ENCODE measurements at regions of chr15 and their contacts with region 1.

Region 1: DNA sequence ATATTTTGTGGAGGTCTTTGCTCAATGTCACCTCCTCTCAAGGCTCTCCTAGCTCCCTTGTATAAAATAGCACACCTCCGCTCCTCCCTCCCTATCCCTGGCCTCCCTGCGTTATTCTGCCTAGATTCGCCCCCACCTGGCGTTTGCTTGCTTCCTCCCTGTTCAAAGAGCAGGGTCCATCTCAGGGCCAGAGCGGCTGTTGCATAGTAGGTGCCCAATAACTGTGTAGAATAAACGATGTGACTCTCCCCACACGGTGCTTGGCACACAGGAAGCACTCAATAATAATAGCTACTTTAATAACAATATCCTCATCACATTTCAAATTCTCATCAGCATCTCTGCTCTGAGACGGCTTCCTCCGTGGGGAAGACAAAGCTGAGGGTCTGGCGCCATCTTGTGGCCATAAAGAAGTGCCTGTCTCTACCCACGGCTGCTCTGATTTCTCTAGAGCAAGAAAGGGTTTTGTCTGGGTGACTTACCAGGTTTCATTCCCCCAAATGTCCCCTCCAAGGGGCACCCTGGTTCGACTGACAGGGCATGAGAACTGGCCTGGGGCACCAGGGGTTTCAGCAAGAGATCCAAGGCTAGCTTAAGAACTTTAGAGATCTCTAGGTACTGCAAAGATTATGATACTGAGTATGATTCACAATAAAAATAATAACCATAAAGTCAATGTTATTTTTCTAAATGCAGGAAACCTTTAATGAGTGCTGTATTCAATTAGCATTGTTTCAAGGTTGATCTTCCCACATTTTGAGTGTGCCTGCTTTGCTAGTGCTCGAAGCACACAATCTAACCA is 16.1 kb downstream of the CD276 start:
- DNase-seq: peak; percentile 71 to 93 (median 82)
- H3K4me3 ChIP-seq: no peak overlapping the region
- H3K27ac ChIP-seq: no peak overlapping the region
- H3K4me1 ChIP-seq: peaks cover 26 to 34% of the 10 kb centered on the region in 2 donors
- H3K27me3 ChIP-seq: no peaks in the 10 kb centered on the region
- CTCF ChIP-seq: peak; percentile 86 to 95 (median 93)
- POLR2A ChIP-seq: no peak

Region 2: DNA sequence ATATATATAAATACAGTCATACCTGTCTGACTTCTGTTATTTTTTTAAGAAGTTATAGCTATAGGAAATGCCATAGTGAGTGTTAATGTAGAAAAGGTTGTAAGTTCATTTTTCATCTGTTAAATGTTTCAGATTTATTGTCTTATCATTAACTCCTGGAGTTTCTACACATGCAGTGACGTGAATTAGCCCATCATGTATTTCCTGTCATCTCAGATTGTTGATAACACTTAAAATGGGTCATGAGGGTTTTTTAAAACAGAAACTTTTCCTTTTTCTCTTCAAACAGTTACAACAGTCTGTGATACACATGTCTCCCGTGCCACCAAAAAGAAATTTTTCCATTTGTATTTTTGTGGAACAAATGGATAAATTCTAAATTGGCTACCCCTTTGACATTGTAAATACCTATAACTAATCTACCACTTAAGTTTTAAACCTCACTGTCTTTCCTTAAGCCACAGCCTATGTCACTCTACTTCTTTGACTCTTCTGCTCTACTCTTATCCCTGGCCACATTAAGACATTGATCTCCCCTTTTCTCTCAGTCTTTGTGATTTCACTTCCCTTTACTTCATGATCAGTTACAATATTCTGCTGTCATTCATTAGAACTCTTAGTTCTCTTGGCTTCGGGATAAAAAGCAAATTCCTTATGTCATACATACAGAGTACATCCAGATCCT is 558.9 kb before region 1 on chr15:
- intact Hi-C with region 1: no loop called
- DNase-seq: no peak
- H3K4me3 ChIP-seq: no peak overlapping the region
- H3K27ac ChIP-seq: no peak overlapping the region
- H3K4me1 ChIP-seq: peaks cover 0 to 5% of the 10 kb centered on the region in 2 donors
- H3K27me3 ChIP-seq: no peaks in the 10 kb centered on the region
- CTCF ChIP-seq: no peak
- POLR2A ChIP-seq: no peak

Region 3: GRCh38 chr15:73305331-73306211 is 394.7 kb before region 1 on chr15:
- intact Hi-C with region 1: loop called in 1 of 2 experiments (anchors 10 kb)
- DNase-seq: peak in 6 of 7 donors; percentile 25 to 78 (median 38)
- H3K4me3 ChIP-seq: no peak overlapping the region
- H3K27ac ChIP-seq: no peak overlapping the region
- H3K4me1 ChIP-seq: peaks cover 0 to 3% of the 10 kb centered on the region in 2 donors
- H3K27me3 ChIP-seq: no peaks in the 10 kb centered on the region
- CTCF ChIP-seq: peak; percentile 7 to 53 (median 36)
- POLR2A ChIP-seq: no peak

Region 4: DNA sequence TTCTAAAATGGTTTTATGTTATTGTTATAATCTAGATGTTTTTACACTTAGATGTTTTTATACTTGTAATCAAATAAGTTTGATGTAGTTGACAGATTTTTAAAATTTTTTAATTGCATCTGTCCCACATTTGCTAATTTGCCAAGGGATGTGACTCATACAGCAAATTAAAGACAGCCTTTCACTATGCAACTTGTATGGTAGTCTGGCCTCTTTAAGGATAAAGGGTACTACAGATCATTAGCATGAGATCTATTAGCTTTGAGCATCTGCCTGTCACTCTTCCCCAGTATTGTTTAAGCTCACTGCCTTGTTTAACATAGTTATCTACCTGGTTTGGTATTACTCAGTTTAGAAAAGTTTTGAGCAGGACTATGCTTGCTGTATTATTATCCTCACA is 150.1 kb before region 1 on chr15:
- intact Hi-C with region 1: loop called in 1 of 2 experiments (anchors 10 kb)
- DNase-seq: no peak
- H3K4me3 ChIP-seq: no peak overlapping the region
- H3K27ac ChIP-seq: no peak overlapping the region
- H3K4me1 ChIP-seq: no peaks in the 10 kb centered on the region
- H3K27me3 ChIP-seq: no peaks in the 10 kb centered on the region
- CTCF ChIP-seq: no peak
- POLR2A ChIP-seq: no peak

Region 5: GRCh38 chr15:73633111-73633990 is 66.9 kb before region 1 on chr15 and contains the start of gene NPTN:
- intact Hi-C with region 1: loop called (anchors 2 to 10 kb)
- DNase-seq: peak; percentile 98 to 99 (median 99)
- H3K4me3 ChIP-seq: peak within 1 kb of the TSS; percentile 37 to 99 (median 62)
- H3K27ac ChIP-seq: peak within 1 kb of the TSS in 4 of 5 donors; percentile 85 to 92 (median 91)
- H3K4me1 ChIP-seq: peaks cover 37 to 45% of the 10 kb centered on the region in 2 donors
- H3K27me3 ChIP-seq: no peaks in the 10 kb centered on the region
- CTCF ChIP-seq: no peak
- POLR2A ChIP-seq: peak; percentile 11 to 86
- total RNA-seq, gene NPTN: 100 to 197 (median 132) TPM

Region 6: DNA sequence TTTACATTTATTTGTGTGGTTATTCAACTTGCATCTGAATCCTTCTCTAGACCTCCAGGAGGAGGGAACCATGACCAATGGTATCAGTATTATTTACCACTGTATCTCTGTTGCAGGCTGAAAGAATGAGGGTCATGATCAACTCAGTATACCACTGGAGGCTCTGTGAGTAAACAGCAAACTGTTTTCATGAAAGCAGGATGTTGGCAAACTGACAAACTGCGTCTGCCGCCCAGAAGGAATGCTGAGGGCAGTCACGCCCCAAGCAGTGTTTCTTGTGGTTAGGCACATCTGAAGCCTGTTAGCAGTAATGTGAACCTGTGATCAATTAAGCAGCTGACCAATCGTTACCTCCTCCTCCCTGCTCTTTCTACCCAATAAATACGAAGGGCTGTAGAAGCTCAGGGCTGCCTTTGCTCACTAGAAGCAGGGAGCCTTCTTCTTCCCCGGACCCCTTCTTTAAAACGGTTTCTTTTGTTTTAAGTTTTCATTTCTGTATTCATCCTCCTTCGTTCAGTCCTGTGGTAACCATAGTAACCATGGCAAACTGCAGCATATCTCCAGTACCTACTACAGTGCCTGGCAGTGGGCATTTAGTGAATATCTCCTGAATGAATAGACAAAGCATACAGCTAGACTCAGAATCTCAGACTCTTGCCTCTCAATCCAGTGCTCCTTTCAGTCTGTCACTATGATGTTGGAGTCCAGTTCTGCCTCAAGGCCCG is 60.6 kb before region 1 on chr15:
- intact Hi-C with region 1: loop called (anchors 2 to 10 kb)
- DNase-seq: no peak
- H3K4me3 ChIP-seq: no peak overlapping the region
- H3K27ac ChIP-seq: no peak overlapping the region
- H3K4me1 ChIP-seq: peaks cover 0 to 9% of the 10 kb centered on the region in 2 donors
- H3K27me3 ChIP-seq: no peaks in the 10 kb centered on the region
- CTCF ChIP-seq: no peak
- POLR2A ChIP-seq: no peak

Region 7: GRCh38 chr15:73677146-73677607 is 23.1 kb before region 1 on chr15:
- intact Hi-C with region 1: loop called (anchors 2 kb)
- DNase-seq: peak; percentile 73 to 91 (median 78)
- H3K4me3 ChIP-seq: no peak overlapping the region
- H3K27ac ChIP-seq: no peak overlapping the region
- H3K4me1 ChIP-seq: peaks cover 0 to 3% of the 10 kb centered on the region in 2 donors
- H3K27me3 ChIP-seq: no peaks in the 10 kb centered on the region
- CTCF ChIP-seq: peak; percentile 84 to 97 (median 94)
- POLR2A ChIP-seq: no peak

Region 8: DNA sequence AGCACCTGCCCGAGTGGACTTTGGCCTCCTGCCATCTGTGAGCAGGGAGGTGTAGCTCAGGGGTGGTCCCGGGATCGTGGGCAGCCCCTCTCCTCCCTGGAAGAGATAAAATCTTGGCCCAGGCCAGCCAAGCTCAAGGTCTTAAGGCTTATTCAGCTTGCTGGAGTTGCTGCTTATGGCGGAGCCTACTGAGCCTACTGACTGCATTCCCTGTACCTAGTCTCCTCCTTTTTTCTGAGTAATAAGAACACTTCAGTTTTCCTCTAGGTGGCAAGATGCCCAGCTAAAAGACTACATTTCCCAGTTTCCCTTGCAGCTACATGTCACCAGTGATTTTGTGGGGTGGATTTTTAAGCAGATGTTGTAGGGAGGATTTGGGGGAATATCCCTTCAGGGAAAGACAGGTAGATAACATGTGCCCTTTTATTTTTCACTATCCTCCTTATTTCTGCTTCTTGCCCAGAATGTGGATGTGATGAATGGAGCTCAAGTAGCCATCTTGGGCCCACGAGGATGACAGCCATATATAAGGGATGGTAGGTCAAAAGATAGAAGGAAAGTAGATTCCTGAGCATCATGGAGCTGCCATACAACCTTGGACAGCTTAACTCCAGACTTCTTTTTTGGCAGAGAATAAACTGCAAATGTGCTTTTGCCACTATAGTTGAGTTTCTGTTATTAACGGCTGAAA is 94.3 kb after region 1 on chr15:
- intact Hi-C with region 1: no loop called
- DNase-seq: no peak
- H3K4me3 ChIP-seq: no peak overlapping the region
- H3K27ac ChIP-seq: no peak overlapping the region
- H3K4me1 ChIP-seq: no peaks in the 10 kb centered on the region
- H3K27me3 ChIP-seq: no peaks in the 10 kb centered on the region
- CTCF ChIP-seq: no peak
- POLR2A ChIP-seq: no peak

Measured in adrenal gland (tissue), 19 donors.